GM12878 (cell line): ENCODE measurements at regions of chr18 and their contacts with region 1.

Region 1: GRCh38 chr18:22800551-22800951 is 132.6 kb upstream of the RBBP8 start:
- DNase-seq: no peak
- ATAC-seq: no peak
- H3K4me3 ChIP-seq: no peak overlapping the region
- H3K27ac ChIP-seq: no peak overlapping the region
- H3K4me1 ChIP-seq: no peaks in the 10 kb centered on the region; the same call in 1 of the 2 replicates
- H3K27me3 ChIP-seq: no peaks in the 10 kb centered on the region
- CTCF ChIP-seq: no peak
- EP300 ChIP-seq: no peak
- POLR2A ChIP-seq: no peak
- RAD21 ChIP-seq: no peak

Region 2: DNA sequence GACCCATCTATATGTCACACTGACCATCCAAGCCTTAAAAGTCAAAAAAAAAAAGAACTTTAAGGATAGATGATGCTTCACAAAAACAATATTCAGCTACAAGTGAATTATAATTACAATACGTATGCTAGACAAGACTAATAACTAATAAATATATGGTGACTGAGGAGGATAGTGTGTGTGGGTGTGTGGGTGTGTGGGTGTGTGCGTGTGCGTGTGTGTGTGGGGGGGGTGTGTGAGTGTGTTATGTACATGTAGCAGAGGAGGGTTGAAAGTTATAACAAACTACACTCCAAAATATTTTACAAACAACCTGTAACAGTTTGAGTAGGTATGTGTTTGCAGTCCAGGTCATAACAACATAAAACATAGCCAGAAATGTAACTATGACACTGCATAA is 26.6 kb before region 1 on chr18:
- CTCF ChIA-PET with region 1: interaction called, 58 read pairs
- POLR2A ChIA-PET with region 1: no interaction called
- RAD21 ChIA-PET with region 1: interaction called, 7 read pairs
- SMC1A ChIA-PET with region 1: interaction called, 13 read pairs
- in situ Hi-C with region 1: no loop called
- intact Hi-C with region 1: no loop called
- DNase-seq: no peak
- ATAC-seq: no peak
- H3K4me3 ChIP-seq: no peak overlapping the region
- H3K27ac ChIP-seq: no peak overlapping the region
- H3K4me1 ChIP-seq: no peaks in the 10 kb centered on the region
- H3K27me3 ChIP-seq: no peaks in the 10 kb centered on the region; a peak in 1 of 4 replicates
- CTCF ChIP-seq: no peak
- EP300 ChIP-seq: no peak
- POLR2A ChIP-seq: no peak
- RAD21 ChIP-seq: no peak

Region 3: DNA sequence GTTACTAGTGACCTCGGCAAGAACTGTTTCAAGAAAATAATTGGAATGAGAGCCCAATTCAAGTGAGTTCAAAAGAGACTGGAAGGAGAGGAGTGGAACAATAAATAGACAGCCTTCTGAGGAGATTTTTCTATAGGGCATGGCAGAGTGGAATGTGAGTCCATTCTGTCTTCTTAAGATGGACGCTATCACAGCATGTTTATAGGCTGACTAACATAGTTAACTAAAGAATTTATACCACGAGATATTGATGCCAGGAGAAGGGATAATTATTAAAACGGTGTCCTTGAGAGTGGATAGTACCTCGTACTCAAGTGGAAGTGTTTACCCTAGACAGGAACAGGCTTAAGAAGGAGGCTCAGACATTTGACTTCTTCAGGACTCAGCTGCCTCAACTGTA is 11.0 kb before region 1 on chr18:
- CTCF ChIA-PET with region 1: interaction called, 37 read pairs
- POLR2A ChIA-PET with region 1: interaction called, 11 read pairs
- RAD21 ChIA-PET with region 1: interaction called, 8 read pairs
- SMC1A ChIA-PET with region 1: interaction called, 7 read pairs
- in situ Hi-C with region 1: no loop called
- intact Hi-C with region 1: no loop called
- DNase-seq: no peak
- ATAC-seq: no peak
- H3K4me3 ChIP-seq: no peak overlapping the region
- H3K27ac ChIP-seq: no peak overlapping the region
- H3K4me1 ChIP-seq: no peaks in the 10 kb centered on the region
- H3K27me3 ChIP-seq: no peaks in the 10 kb centered on the region; a peak in 1 of 4 replicates
- CTCF ChIP-seq: no peak
- EP300 ChIP-seq: no peak
- POLR2A ChIP-seq: no peak
- RAD21 ChIP-seq: no peak

Region 4: GRCh38 chr18:22846088-22846683 is 45.6 kb after region 1 on chr18:
- CTCF ChIA-PET with region 1: interaction called, 10 read pairs
- POLR2A ChIA-PET with region 1: no interaction called
- RAD21 ChIA-PET with region 1: interaction called, 3 read pairs
- SMC1A ChIA-PET with region 1: interaction called, 4 read pairs
- in situ Hi-C with region 1: no loop called
- intact Hi-C with region 1: no loop called
- DNase-seq: no peak
- ATAC-seq: 0 out of 3 replicates have a peak, but pooled peaks have one; percentile 38
- H3K4me3 ChIP-seq: no peak overlapping the region
- H3K27ac ChIP-seq: no peak overlapping the region
- H3K4me1 ChIP-seq: 0 out of 2 replicates have a peak, but pooled peaks cover 3% of the 10 kb centered on the region
- H3K27me3 ChIP-seq: no peaks in the 10 kb centered on the region
- CTCF ChIP-seq: peak; percentile 16 to 35 (median 33); a peak in 4 of 6 replicates
- EP300 ChIP-seq: no peak
- POLR2A ChIP-seq: no peak
- RAD21 ChIP-seq: peak; percentile 42

Region 5: DNA sequence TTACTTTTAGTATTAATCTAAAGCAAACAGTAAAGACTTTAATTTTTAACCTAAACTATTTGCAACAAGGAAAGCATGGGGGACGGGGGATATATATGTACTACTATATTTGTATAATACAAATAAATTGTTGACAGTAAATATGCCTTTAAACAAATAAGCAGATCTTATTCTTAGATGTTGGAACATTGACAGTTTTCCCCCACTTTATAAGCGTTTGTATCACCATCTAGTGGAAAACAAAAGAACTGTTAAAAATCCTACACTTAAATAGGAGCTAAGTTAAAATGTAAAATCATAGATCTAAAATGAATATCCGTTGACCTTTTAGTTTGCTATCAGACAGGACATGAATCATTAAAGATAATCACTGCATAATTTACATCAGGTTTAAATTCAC is 182.6 kb after region 1 on chr18:
- CTCF ChIA-PET with region 1: interaction called, 63 read pairs
- POLR2A ChIA-PET with region 1: interaction called, 3 read pairs
- RAD21 ChIA-PET with region 1: interaction called, 39 read pairs
- SMC1A ChIA-PET with region 1: interaction called, 49 read pairs
- in situ Hi-C with region 1: loop called (anchors 5 kb)
- intact Hi-C with region 1: loop called (anchors 1 kb)
- DNase-seq: no peak
- ATAC-seq: peak; percentile 50
- H3K4me3 ChIP-seq: no peak overlapping the region
- H3K27ac ChIP-seq: no peak overlapping the region
- H3K4me1 ChIP-seq: peaks cover 7% of the 10 kb centered on the region
- H3K27me3 ChIP-seq: no peaks in the 10 kb centered on the region
- CTCF ChIP-seq: peak; percentile 27 to 57 (median 34); a peak in 4 of 6 replicates
- EP300 ChIP-seq: no peak
- POLR2A ChIP-seq: no peak
- RAD21 ChIP-seq: peak; percentile 73